ENCODE measurements at regions of chr5 and their contacts with region 1.

Region 1: DNA sequence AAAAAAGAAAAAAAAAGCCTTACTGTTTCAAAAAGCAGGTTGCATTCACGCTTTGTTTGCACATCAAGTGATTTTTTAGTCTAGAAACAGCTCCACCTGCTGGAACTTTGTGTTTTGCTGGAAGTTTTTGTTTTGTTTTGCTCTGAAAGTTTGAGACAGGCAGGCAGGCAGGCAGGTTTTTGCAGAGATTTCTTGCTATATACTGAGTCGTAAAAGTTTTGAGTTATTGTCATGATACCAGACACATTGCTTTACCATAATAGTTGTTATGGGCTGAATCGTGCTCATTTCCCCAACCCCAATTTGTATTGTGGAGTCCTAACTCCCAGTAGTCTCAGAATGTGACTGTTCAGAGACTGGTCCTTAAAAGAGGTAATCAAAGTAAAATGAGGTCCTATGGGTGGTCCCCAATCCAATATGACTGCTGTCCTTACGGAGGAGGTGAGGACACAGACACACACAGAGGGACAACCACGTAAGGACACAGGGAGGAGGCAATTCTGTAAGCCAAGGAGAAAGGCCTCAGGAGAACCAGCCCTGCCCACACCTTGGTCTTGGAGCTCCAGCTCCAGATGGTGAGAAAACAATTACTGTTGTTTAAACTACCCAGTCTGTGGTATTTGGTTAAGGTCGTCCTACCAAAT is 20.9 kb downstream of the OR2Y1 start:
- DNase-seq: peak in 1 of 2 donors; percentile 74
- ATAC-seq: no peak
- H3K4me3 ChIP-seq: no peak overlapping the region
- H3K4me3 Mint-ChIP-seq: no peak overlapping the region
- H3K27ac ChIP-seq: peak overlapping the region; percentile 24
- H3K27ac Mint-ChIP-seq: no peak overlapping the region
- H3K4me1 ChIP-seq: peaks cover 4% of the 10 kb centered on the region
- H3K4me1 Mint-ChIP-seq: peaks cover 6 to 18% of the 10 kb centered on the region in 2 donors
- H3K27me3 ChIP-seq: no peaks in the 10 kb centered on the region
- H3K27me3 Mint-ChIP-seq: peaks cover 0 to 14% of the 10 kb centered on the region in 2 donors
- CTCF ChIP-seq: peak; percentile 68

Region 2: GRCh38 chr5:180179442-180180420 is 539.2 kb before region 1 on chr5:
- intact Hi-C with region 1: no loop called
- DNase-seq: no peak
- ATAC-seq: no peak
- H3K4me3 ChIP-seq: no peak overlapping the region
- H3K4me3 Mint-ChIP-seq: no peak overlapping the region
- H3K27ac ChIP-seq: no peak overlapping the region
- H3K27ac Mint-ChIP-seq: no peak overlapping the region
- H3K4me1 ChIP-seq: no peaks in the 10 kb centered on the region
- H3K4me1 Mint-ChIP-seq: no peaks in the 10 kb centered on the region
- H3K27me3 ChIP-seq: no peaks in the 10 kb centered on the region
- H3K27me3 Mint-ChIP-seq: peaks cover 5 to 10% of the 10 kb centered on the region in 2 donors
- CTCF ChIP-seq: no peak

Region 3: GRCh38 chr5:180670586-180671359 is 48.2 kb before region 1 on chr5:
- intact Hi-C with region 1: loop called (anchors 5 kb)
- DNase-seq: peak in 1 of 2 donors; percentile 75
- ATAC-seq: peak; percentile 56 to 75 (median 60)
- H3K4me3 ChIP-seq: no peak overlapping the region
- H3K4me3 Mint-ChIP-seq: peak overlapping the region; percentile 28
- H3K27ac ChIP-seq: no peak overlapping the region
- H3K27ac Mint-ChIP-seq: peak overlapping the region in 1 of 2 donors; percentile 74
- H3K4me1 ChIP-seq: peaks cover 15% of the 10 kb centered on the region
- H3K4me1 Mint-ChIP-seq: peaks cover 7 to 26% of the 10 kb centered on the region in 2 donors
- H3K27me3 ChIP-seq: peaks cover 5% of the 10 kb centered on the region
- H3K27me3 Mint-ChIP-seq: peaks cover 11 to 12% of the 10 kb centered on the region in 2 donors
- CTCF ChIP-seq: peak; percentile 68

Region 4: GRCh38 chr5:180860887-180861822 is 142.2 kb after region 1 on chr5 and contains the start of gene ZFP62:
- intact Hi-C with region 1: no loop called
- DNase-seq: peak; percentile 86 to 93
- ATAC-seq: peak; percentile 86 to 95 (median 89)
- H3K4me3 ChIP-seq: peak within 1 kb of the TSS; percentile 99
- H3K4me3 Mint-ChIP-seq: peak within 1 kb of the TSS; percentile 92
- H3K27ac ChIP-seq: peak within 1 kb of the TSS; percentile 93
- H3K27ac Mint-ChIP-seq: peak within 1 kb of the TSS; percentile 89 to 90
- H3K4me1 ChIP-seq: peaks cover 9% of the 10 kb centered on the region
- H3K4me1 Mint-ChIP-seq: peaks cover 24 to 27% of the 10 kb centered on the region in 2 donors
- H3K27me3 ChIP-seq: no peaks in the 10 kb centered on the region
- H3K27me3 Mint-ChIP-seq: peaks cover 3 to 4% of the 10 kb centered on the region in 2 donors
- CTCF ChIP-seq: no peak
- total RNA-seq, gene ZFP62: 16.6 to 21.0 (median 20.3) TPM